Ovary (tissue), 10 donors: ENCODE measurements at regions of chr20 and their contacts with region 1.

Region 1: DNA sequence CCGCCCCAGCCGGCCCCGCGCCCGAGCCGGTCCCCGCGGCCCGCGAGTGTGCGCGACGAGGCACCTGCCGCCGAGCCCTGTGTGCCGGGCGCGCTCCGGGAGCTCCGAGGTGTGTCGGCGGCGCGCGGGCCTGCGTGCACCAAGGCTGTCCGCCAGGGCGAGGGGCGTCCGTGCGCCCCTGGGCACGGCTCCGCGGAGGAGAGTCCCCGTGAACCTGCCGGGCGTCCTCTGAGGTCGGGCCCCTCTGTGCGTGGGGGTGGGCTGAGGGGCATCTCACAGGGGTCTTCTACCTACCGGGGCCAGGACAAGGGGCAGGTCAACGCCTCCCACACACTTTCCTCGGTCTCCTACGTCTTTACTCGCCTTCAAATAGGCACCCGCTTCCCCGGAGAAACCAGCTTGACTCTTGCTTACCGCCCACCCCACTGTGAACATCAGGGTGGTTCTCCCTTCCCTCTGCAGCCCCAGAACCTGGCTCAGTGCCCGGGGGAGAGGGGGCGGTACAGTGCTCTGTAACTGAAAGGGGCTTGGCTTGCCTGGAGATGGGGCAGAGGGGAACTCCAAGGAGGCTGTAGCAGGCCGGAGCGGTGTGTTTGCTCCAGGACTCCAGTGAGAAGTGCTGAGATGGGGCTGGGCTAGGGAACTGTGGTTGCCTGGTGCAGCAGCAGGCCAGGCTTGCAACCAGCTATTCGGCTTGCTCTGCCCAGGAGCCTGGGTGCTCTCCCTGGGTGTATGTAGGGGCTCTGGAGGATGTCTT is at the start of gene SAMD10:
- DNase-seq: peak in 4 of 5 donors; percentile 23 to 61 (median 59)
- H3K4me3 ChIP-seq: peak within 1 kb of the TSS; percentile 83
- H3K27ac ChIP-seq: no peak within 1 kb of the TSS
- H3K4me1 ChIP-seq: peaks cover 16% of the 10 kb centered on the region
- H3K27me3 ChIP-seq: peaks cover 5% of the 10 kb centered on the region
- CTCF ChIP-seq: no peak
- EP300 ChIP-seq: no peak
- POLR2A ChIP-seq: no peak
- total RNA-seq, gene SAMD10: 0.20 to 3.1 (median 0.65) TPM

Region 2: GRCh38 chr20:63635431-63636141 is 344.2 kb before region 1 on chr20:
- intact Hi-C with region 1: no loop called
- DNase-seq: no peak
- H3K4me3 ChIP-seq: no peak overlapping the region
- H3K27ac ChIP-seq: no peak overlapping the region
- H3K4me1 ChIP-seq: peaks cover 6% of the 10 kb centered on the region
- H3K27me3 ChIP-seq: no peaks in the 10 kb centered on the region
- CTCF ChIP-seq: no peak
- EP300 ChIP-seq: no peak
- POLR2A ChIP-seq: no peak

Region 3: DNA sequence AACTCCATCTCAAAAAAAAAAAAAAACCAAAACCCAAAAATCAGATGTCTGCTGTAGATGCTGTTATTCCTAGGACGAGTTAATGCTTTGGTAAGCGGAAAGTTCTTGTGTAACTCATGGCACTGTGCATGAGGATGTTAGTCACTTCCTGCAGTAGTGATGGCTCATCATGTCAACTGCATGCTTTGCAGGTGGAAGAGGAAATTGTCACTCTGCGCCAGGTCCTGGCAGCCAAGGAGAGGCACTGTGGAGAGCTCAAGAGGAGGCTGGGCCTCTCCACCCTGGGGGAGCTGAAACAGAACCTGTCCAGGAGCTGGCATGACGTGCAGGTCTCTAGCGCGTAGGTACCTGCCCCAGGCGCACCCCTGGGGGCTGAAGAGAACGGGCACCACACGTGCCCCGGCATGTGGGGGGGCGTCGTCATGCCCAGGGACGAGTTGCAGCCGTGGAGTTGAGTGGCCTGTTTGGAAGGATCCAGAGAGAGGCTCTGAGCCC is 106.2 kb before region 1 on chr20:
- intact Hi-C with region 1: no loop called
- DNase-seq: no peak
- H3K4me3 ChIP-seq: no peak overlapping the region
- H3K27ac ChIP-seq: no peak overlapping the region
- H3K4me1 ChIP-seq: no peaks in the 10 kb centered on the region
- H3K27me3 ChIP-seq: no peaks in the 10 kb centered on the region
- CTCF ChIP-seq: no peak
- EP300 ChIP-seq: no peak
- POLR2A ChIP-seq: no peak

Region 4: DNA sequence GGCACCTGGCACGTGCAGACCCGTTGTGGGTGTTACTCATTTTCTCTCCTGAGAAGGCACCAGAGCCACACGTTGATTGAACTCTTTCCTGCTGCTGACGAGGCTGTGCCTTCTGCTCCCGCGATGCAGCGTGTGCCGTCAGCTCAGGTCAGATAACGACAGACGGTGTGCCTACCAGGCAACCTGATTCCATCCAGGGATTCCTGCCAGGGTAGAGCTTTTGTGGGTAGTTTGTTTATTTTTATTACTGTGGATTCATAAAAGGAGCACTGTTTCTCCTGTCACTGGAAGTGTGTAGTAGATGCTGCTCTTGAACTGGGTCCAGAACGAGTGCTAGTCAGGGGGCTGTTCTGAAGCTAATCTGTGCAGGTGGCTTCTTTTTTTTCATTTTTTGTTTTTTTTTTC is 21.9 kb after region 1 on chr20:
- intact Hi-C with region 1: loop called in 1 of 4 experiments (anchors 2 kb)
- DNase-seq: no peak
- H3K4me3 ChIP-seq: no peak overlapping the region
- H3K27ac ChIP-seq: no peak overlapping the region
- H3K4me1 ChIP-seq: no peaks in the 10 kb centered on the region
- H3K27me3 ChIP-seq: no peaks in the 10 kb centered on the region
- CTCF ChIP-seq: no peak
- EP300 ChIP-seq: no peak
- POLR2A ChIP-seq: no peak

Region 5: GRCh38 chr20:64269604-64270411 is 290.1 kb after region 1 on chr20:
- intact Hi-C with region 1: no loop called
- DNase-seq: no peak
- H3K4me3 ChIP-seq: no peak overlapping the region
- H3K27ac ChIP-seq: no peak overlapping the region
- H3K4me1 ChIP-seq: peaks cover 5% of the 10 kb centered on the region
- H3K27me3 ChIP-seq: no peaks in the 10 kb centered on the region
- CTCF ChIP-seq: no peak
- EP300 ChIP-seq: no peak
- POLR2A ChIP-seq: no peak